ENCODE measurements at regions of chr1 and their contacts with region 1.

Region 1: GRCh38 chr1:32933742-32934322 is 30.8 kb downstream of the RNF19B start:
- DNase-seq: no peak
- ATAC-seq: no peak
- H3K4me3 ChIP-seq: no peak overlapping the region
- H3K4me3 Mint-ChIP-seq: no peak overlapping the region
- H3K27ac ChIP-seq: no peak overlapping the region
- H3K27ac Mint-ChIP-seq: no peak overlapping the region
- H3K4me1 ChIP-seq: no peaks in the 10 kb centered on the region
- H3K4me1 Mint-ChIP-seq: no peaks in the 10 kb centered on the region
- H3K27me3 ChIP-seq: no peaks in the 10 kb centered on the region
- H3K27me3 Mint-ChIP-seq: no peaks in the 10 kb centered on the region
- CTCF ChIP-seq: peak; percentile 34

Region 2: GRCh38 chr1:32719681-32720275 is 214.1 kb before region 1 on chr1:
- CTCF ChIA-PET with region 1: no interaction called
- POLR2A ChIA-PET with region 1: no interaction called
- intact Hi-C with region 1: no loop called
- DNase-seq: no peak
- ATAC-seq: no peak
- H3K4me3 ChIP-seq: no peak overlapping the region
- H3K4me3 Mint-ChIP-seq: no peak overlapping the region
- H3K27ac ChIP-seq: no peak overlapping the region
- H3K27ac Mint-ChIP-seq: no peak overlapping the region
- H3K4me1 ChIP-seq: peaks cover 0 to 6% of the 10 kb centered on the region in 2 donors
- H3K4me1 Mint-ChIP-seq: peaks cover 4% of the 10 kb centered on the region
- H3K27me3 ChIP-seq: peaks cover 0 to 28% (median 6%) of the 10 kb centered on the region in 4 experiments
- H3K27me3 Mint-ChIP-seq: peaks cover 21% of the 10 kb centered on the region
- CTCF ChIP-seq: no peak

Region 3: DNA sequence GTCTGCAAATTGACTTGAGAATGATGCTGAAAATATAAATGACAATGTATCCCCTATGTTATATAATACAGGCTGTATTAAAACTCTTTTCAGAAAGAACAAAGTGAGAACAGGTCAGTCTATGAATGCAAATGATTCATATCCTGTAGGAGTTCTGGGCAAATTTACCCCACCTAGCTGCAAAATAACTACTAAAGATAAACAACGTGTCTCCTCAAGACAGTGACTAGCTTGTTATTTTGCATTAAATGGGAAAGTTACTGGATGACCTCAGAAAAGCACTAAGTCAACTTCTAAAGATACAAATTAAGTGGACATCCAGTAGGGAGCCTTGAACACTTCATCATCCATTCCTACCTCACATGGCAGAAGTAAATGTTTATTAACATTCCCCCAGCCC is 19.7 kb after region 1 on chr1:
- CTCF ChIA-PET with region 1: interaction called, 25 read pairs
- POLR2A ChIA-PET with region 1: interaction called, 4 read pairs
- intact Hi-C with region 1: no loop called
- DNase-seq: no peak
- ATAC-seq: no peak
- H3K4me3 ChIP-seq: no peak overlapping the region
- H3K4me3 Mint-ChIP-seq: peak overlapping the region; percentile 3
- H3K27ac ChIP-seq: no peak overlapping the region
- H3K27ac Mint-ChIP-seq: no peak overlapping the region
- H3K4me1 ChIP-seq: peaks cover 14 to 19% of the 10 kb centered on the region in 2 donors
- H3K4me1 Mint-ChIP-seq: peaks cover 55% of the 10 kb centered on the region
- H3K27me3 ChIP-seq: no peaks in the 10 kb centered on the region
- H3K27me3 Mint-ChIP-seq: no peaks in the 10 kb centered on the region
- CTCF ChIP-seq: no peak

Region 4: DNA sequence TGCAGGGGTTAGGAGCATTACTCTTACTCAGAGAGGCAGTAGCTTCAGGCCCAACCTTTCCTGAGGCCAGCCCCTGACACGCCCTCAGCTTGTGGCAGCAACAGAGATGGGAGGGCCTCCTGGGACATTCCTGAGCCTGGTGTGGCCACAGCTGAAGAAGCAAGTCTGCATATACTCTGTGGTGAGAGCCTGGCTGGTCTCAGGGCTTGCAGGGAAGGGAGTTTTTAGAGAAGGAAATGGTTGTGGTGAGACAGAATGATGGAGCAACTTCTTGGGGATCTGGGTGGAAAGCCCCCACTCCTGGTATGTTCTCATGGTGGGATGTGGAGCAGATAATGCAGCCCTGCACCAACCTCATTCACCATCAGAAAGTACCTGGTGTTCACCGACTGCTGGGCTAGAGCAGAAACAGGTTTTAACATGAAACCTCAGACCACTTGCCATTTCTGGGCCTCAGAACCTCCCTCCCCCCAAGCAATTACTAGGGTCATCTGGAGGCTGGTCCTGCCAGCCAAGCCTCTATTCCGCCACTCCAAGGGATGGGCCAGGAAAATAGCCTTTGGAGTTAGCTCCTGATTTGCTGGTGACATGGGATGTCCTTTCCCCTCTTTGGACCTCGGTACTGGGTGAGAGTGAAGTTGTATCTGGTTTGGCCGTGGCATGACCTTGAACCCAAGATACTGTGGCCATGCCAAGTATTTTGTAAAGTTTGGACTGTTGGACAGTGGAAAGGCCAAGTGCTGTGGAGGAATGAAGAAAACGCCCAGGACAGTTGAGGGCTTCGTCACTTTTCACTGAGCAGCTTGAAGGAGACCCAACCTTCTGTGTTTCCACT is 58.9 kb after region 1 on chr1:
- CTCF ChIA-PET with region 1: interaction called, 19 read pairs
- POLR2A ChIA-PET with region 1: no interaction called
- intact Hi-C with region 1: no loop called
- DNase-seq: peak; percentile 87
- ATAC-seq: peak; percentile 94
- H3K4me3 ChIP-seq: peak overlapping the region in 3 of 5 experiments; percentile 10 to 48 (median 12)
- H3K4me3 Mint-ChIP-seq: peak overlapping the region; percentile 74
- H3K27ac ChIP-seq: peak overlapping the region; percentile 63 to 88
- H3K27ac Mint-ChIP-seq: peak overlapping the region; percentile 98
- H3K4me1 ChIP-seq: peaks cover 53 to 54% of the 10 kb centered on the region in 2 donors
- H3K4me1 Mint-ChIP-seq: peaks cover 63% of the 10 kb centered on the region
- H3K27me3 ChIP-seq: no peaks in the 10 kb centered on the region
- H3K27me3 Mint-ChIP-seq: no peaks in the 10 kb centered on the region
- CTCF ChIP-seq: no peak

Region 5: GRCh38 chr1:33014464-33015163 is 80.8 kb after region 1 on chr1:
- CTCF ChIA-PET with region 1: interaction called, 205 read pairs
- POLR2A ChIA-PET with region 1: no interaction called
- intact Hi-C with region 1: no loop called
- DNase-seq: no peak
- ATAC-seq: no peak
- H3K4me3 ChIP-seq: no peak overlapping the region
- H3K4me3 Mint-ChIP-seq: no peak overlapping the region
- H3K27ac ChIP-seq: no peak overlapping the region
- H3K27ac Mint-ChIP-seq: no peak overlapping the region
- H3K4me1 ChIP-seq: no peaks in the 10 kb centered on the region
- H3K4me1 Mint-ChIP-seq: no peaks in the 10 kb centered on the region
- H3K27me3 ChIP-seq: no peaks in the 10 kb centered on the region
- H3K27me3 Mint-ChIP-seq: no peaks in the 10 kb centered on the region
- CTCF ChIP-seq: no peak

Region 6: DNA sequence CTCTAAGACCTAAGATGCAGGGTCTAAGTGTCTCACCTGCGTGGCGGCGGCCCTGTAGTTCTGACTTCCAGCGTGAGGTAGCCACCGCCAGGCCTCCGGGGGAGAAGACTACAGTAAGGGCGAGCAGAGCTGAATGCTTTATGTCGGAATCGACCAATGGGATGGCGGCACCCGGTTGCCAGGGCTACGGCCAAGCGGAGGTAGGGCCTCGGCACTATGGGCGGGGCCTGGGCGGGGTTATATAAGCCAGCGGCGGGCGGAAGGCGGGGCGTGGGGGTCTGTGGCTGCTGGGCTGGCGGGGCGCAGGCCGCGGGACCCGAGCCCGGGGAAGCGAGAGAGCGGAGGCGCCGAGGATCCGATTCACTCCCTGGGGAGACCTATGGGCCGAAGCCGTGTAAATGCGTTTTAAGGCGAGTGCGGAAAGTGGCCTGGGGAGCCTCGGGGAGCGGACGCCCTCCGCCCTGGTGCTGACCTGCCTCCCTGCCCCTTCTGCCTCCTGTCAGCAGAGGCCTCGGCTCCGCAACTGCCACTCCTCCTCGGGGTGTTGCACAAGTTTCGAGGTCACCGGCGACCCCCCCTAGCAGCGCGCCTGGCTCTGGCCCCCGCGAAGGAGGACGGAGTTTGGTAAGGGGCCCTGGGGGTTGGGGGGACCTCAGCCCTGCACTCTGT is 147.2 kb after region 1 on chr1 and contains the start of gene AZIN2:
- CTCF ChIA-PET with region 1: interaction called, 118 read pairs
- POLR2A ChIA-PET with region 1: no interaction called
- intact Hi-C with region 1: no loop called
- DNase-seq: peak; percentile 94
- ATAC-seq: peak; percentile 99
- H3K4me3 ChIP-seq: peak within 1 kb of the TSS; percentile 50 to 73 (median 63)
- H3K4me3 Mint-ChIP-seq: peak within 1 kb of the TSS; percentile 85
- H3K27ac ChIP-seq: no peak within 1 kb of the TSS
- H3K27ac Mint-ChIP-seq: peak within 1 kb of the TSS; percentile 47
- H3K4me1 ChIP-seq: peaks cover 14 to 19% of the 10 kb centered on the region in 2 donors
- H3K4me1 Mint-ChIP-seq: peaks cover 21% of the 10 kb centered on the region
- H3K27me3 ChIP-seq: peaks cover 0 to 12% (median 4%) of the 10 kb centered on the region in 4 experiments
- H3K27me3 Mint-ChIP-seq: peaks cover 7% of the 10 kb centered on the region
- CTCF ChIP-seq: no peak
- total RNA-seq, gene AZIN2: 5.4 and 5.9 TPM in 2 replicates

Measured in B cell (primary cell).